Activated CD8-positive, alpha-beta T cell treated with anti-CD3 and anti-CD28 coated beads, Interleukin-2, amount 10 ng/mL, durations not matched to agents 7 days and 5 days (primary cell): ENCODE measurements at regions of chr1 and their contacts with region 1.

Region 1: DNA sequence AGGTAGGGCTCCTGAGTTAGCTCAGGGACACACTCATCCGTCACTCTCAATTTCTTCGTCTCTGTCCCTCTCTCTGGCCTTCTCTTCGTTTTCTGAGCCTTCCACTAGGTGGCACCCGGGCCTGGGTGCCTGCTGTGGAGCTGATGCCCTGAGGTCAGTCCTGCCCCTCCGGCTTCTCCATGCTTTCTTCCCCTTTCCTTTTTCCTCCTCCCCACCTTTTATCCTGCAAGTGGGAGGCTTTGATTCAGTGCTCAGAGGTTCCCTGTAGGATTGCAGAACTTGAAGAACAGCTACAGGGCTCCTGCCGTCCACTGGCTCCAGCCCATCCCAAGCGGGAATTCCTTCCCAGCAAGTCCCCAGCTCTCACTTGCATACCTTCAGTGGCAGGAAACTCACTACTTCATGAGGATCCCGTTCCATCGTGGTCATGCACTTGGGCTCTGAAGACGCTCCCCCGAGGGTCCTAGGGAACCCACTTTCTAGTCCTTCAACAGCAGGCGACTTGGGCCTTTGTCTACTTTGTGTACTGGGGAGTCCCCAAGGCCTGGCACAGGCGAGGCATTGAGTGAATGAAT is 45.6 kb downstream of the SRRM1 start:
- DNase-seq: peak; percentile 67
- ATAC-seq: peak; percentile 77
- H3K4me3 Mint-ChIP-seq: no peak overlapping the region
- H3K27ac Mint-ChIP-seq: no peak overlapping the region
- H3K4me1 Mint-ChIP-seq: no peaks in the 10 kb centered on the region
- H3K27me3 Mint-ChIP-seq: no peaks in the 10 kb centered on the region

Region 2: DNA sequence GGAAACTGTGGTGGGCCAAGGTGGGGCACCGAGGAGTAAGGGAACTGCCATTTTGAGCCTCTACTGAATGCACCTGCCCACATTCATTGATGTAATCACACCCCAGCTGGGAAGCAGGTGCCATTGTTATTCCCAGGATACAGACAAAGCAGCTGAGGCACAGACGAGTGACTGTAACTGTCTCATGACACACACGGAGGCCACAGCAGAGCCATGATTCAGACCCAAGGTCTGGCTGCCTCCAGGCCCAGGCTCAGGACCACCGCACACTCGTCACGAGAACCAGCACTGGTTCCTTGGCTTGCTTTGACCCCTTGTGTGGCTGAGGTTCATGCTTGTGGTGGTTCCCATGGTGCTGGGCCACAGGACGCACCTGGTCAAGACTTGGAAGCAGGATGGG is 10.9 kb after region 1 on chr1:
- CTCF ChIA-PET with region 1: interaction called, 27 read pairs
- POLR2A ChIA-PET with region 1: no interaction called
- DNase-seq: no peak
- ATAC-seq: no peak
- H3K4me3 Mint-ChIP-seq: no peak overlapping the region
- H3K27ac Mint-ChIP-seq: no peak overlapping the region
- H3K4me1 Mint-ChIP-seq: peaks cover 6% of the 10 kb centered on the region
- H3K27me3 Mint-ChIP-seq: peaks cover 18% of the 10 kb centered on the region

Region 3: GRCh38 chr1:24744911-24745710 is 56.4 kb after region 1 on chr1 and contains the start of gene CLIC4:
- CTCF ChIA-PET with region 1: interaction called, 11 read pairs
- POLR2A ChIA-PET with region 1: no interaction called
- DNase-seq: peak; percentile 100
- ATAC-seq: peak; percentile 91
- H3K4me3 Mint-ChIP-seq: peak within 1 kb of the TSS; percentile 83
- H3K27ac Mint-ChIP-seq: peak within 1 kb of the TSS; percentile 55
- H3K4me1 Mint-ChIP-seq: peaks cover 41% of the 10 kb centered on the region
- H3K27me3 Mint-ChIP-seq: peaks cover 28% of the 10 kb centered on the region
- total RNA-seq, gene CLIC4: 7.1 to 7.7 TPM

Region 4: DNA sequence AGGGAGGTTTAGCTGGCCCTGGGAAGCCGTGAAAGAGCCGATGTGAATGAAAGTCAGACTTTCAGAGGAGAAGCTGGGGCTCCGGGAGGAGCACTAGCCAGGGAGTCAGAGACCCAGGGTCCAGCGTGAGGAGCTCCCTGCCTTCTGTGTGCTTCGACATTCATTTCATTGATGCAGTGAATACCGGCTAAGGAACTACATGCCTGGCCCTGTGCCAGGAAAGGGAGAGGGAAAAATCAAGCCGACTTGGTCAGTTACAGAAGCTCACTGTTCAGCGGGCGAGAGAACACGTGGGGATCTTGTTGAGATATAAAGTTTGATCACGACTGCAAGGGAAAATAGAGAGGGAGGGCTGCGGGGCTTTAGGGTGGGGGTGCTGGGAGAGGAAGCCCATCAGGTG is 318.1 kb after region 1 on chr1:
- CTCF ChIA-PET with region 1: no interaction called
- POLR2A ChIA-PET with region 1: no interaction called
- DNase-seq: no peak
- ATAC-seq: no peak
- H3K4me3 Mint-ChIP-seq: no peak overlapping the region
- H3K27ac Mint-ChIP-seq: peak overlapping the region; percentile 36
- H3K4me1 Mint-ChIP-seq: peaks cover 88% of the 10 kb centered on the region
- H3K27me3 Mint-ChIP-seq: no peaks in the 10 kb centered on the region